ENCODE measurements at regions of chr3 and their contacts with region 1.

Region 1: GRCh38 chr3:168467115-168467714 is 371.5 kb upstream of the GOLIM4 start:
- DNase-seq: peak; percentile 9
- H3K4me3 ChIP-seq: no peak overlapping the region
- H3K27ac ChIP-seq: no peak overlapping the region
- H3K4me1 ChIP-seq: no peaks in the 10 kb centered on the region
- H3K27me3 ChIP-seq: no peaks in the 10 kb centered on the region
- CTCF ChIP-seq: peak; percentile 12 to 18

Region 2: GRCh38 chr3:168047190-168047795 is 419.9 kb before region 1 on chr3:
- CTCF ChIA-PET with region 1: no interaction called
- dilution Hi-C with region 1: no loop called
- in situ Hi-C with region 1: no loop called
- intact Hi-C with region 1: loop called (anchors 1 kb)
- DNase-seq: peak; percentile 73
- H3K4me3 ChIP-seq: no peak overlapping the region
- H3K27ac ChIP-seq: no peak overlapping the region
- H3K4me1 ChIP-seq: no peaks in the 10 kb centered on the region
- H3K27me3 ChIP-seq: no peaks in the 10 kb centered on the region
- CTCF ChIP-seq: peak; percentile 83 to 85

Region 3: GRCh38 chr3:168684519-168684918 is 217.3 kb after region 1 on chr3:
- CTCF ChIA-PET with region 1: no interaction called
- dilution Hi-C with region 1: no loop called
- in situ Hi-C with region 1: no loop called
- intact Hi-C with region 1: no loop called
- DNase-seq: no peak
- H3K4me3 ChIP-seq: no peak overlapping the region
- H3K27ac ChIP-seq: no peak overlapping the region
- H3K4me1 ChIP-seq: no peaks in the 10 kb centered on the region
- H3K27me3 ChIP-seq: no peaks in the 10 kb centered on the region
- CTCF ChIP-seq: no peak